ENCODE measurements at regions of chr6 and their contacts with region 1.

Region 1: DNA sequence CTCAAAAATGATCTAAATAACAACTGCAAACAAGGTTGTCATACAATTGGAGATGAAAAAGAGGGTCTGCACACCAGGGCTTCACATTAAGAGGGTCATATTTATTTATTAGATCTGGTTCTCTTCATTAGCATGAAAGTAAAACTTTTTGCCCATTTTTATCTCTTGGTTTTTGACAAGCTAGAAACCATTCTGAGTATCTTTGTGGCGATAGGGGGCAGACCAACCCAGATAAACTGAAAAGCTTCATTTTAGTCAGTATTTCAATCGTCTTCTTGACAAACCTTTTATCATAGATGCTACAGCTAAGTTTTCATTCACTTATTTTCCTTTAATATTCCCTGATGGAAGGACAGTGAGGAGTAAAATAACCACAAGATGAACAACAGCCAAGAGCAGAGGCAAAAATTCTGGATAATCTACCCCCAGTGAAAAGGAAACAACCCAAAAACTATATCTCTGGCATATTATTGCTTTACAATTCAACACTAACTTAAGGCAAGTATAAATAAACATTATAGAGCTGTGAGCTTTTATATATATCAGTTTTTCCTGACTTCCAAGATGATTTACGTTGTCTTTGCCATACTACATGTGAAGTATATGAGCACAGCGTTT is 45.2 kb downstream of the THEMIS start:
- DNase-seq: peak; percentile 49 to 59 (median 52)
- H3K4me3 ChIP-seq: no peak overlapping the region
- H3K4me3 Mint-ChIP-seq: peak overlapping the region in 6 of 8 donors; percentile 1 to 74 (median 48)
- H3K27ac ChIP-seq: peak overlapping the region; percentile 29
- H3K27ac Mint-ChIP-seq: peak overlapping the region; percentile 42 to 92 (median 66)
- H3K4me1 ChIP-seq: peaks cover 77% of the 10 kb centered on the region
- H3K4me1 Mint-ChIP-seq: peaks cover 57 to 83% (median 72%) of the 10 kb centered on the region in 4 donors
- H3K27me3 ChIP-seq: no peaks in the 10 kb centered on the region
- H3K27me3 Mint-ChIP-seq: no peaks in the 10 kb centered on the region

Region 2: DNA sequence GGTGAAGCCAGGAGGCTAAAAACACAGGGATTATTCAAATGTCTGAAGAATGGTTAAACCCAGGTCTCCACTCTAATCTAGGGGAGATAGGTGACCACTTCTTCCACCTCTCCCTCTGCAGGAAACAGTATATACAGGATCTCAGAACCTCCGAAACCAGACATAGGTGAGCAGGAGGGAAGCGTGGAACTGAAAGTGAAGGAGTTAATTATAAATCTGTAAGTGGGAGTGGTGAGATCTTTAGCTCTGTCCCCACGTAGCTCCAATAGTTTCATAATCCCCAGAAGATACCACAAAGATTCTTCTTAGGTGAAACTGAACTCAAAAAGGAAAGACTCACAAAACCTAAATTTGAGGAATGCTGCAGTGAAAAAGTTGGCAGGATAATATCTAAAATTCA is 31.6 kb before region 1 on chr6:
- CTCF ChIA-PET with region 1: no interaction called
- POLR2A ChIA-PET with region 1: no interaction called
- intact Hi-C with region 1: no loop called
- DNase-seq: no peak
- H3K4me3 ChIP-seq: no peak overlapping the region
- H3K4me3 Mint-ChIP-seq: peak overlapping the region in 5 of 8 donors; percentile 36 to 55 (median 47)
- H3K27ac ChIP-seq: no peak overlapping the region
- H3K27ac Mint-ChIP-seq: peak overlapping the region in 4 of 7 donors; percentile 6 to 84 (median 18)
- H3K4me1 ChIP-seq: peaks cover 42% of the 10 kb centered on the region
- H3K4me1 Mint-ChIP-seq: peaks cover 48 to 80% (median 67%) of the 10 kb centered on the region in 4 donors
- H3K27me3 ChIP-seq: no peaks in the 10 kb centered on the region
- H3K27me3 Mint-ChIP-seq: no peaks in the 10 kb centered on the region

Region 3: DNA sequence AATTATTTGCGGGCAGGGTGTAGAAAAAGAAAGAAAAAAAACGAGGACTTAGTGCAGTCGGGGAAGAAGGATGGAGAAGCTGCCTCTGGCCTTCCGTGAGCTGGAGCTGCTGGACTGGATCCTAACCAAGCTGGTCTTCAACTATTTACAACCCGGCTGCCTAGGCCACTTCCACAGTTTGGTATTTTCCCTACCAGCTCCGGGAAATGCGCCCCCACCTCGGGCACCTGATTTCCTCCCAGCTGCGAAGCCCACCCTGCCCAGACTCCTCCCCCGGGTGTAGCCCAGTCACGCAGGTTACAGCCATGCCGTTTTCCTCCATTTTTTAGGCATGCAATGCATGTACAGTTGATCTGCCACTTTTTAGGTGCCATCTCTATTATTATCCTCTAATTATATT is 24.0 kb after region 1 on chr6:
- CTCF ChIA-PET with region 1: interaction called, 4 read pairs
- POLR2A ChIA-PET with region 1: interaction called, 3 read pairs
- intact Hi-C with region 1: loop called (anchors 2 kb)
- DNase-seq: no peak
- H3K4me3 ChIP-seq: no peak overlapping the region
- H3K4me3 Mint-ChIP-seq: peak overlapping the region in 7 of 8 donors; percentile 43 to 87 (median 61)
- H3K27ac ChIP-seq: no peak overlapping the region
- H3K27ac Mint-ChIP-seq: peak overlapping the region; percentile 36 to 87 (median 81)
- H3K4me1 ChIP-seq: peaks cover 89% of the 10 kb centered on the region
- H3K4me1 Mint-ChIP-seq: peaks cover 52 to 77% (median 66%) of the 10 kb centered on the region in 4 donors
- H3K27me3 ChIP-seq: no peaks in the 10 kb centered on the region
- H3K27me3 Mint-ChIP-seq: no peaks in the 10 kb centered on the region

Region 4: GRCh38 chr6:127918506-127919427 is 63.1 kb after region 1 on chr6:
- CTCF ChIA-PET with region 1: interaction called, 15 read pairs
- POLR2A ChIA-PET with region 1: interaction called, 8 read pairs
- intact Hi-C with region 1: loop called (anchors 2 kb)
- DNase-seq: peak; percentile 72 to 79 (median 75)
- H3K4me3 ChIP-seq: peak overlapping the region; percentile 59 to 68
- H3K4me3 Mint-ChIP-seq: peak overlapping the region; percentile 93 to 99 (median 96)
- H3K27ac ChIP-seq: peak overlapping the region; percentile 53
- H3K27ac Mint-ChIP-seq: peak overlapping the region; percentile 86 to 98 (median 94)
- H3K4me1 ChIP-seq: peaks cover 79% of the 10 kb centered on the region
- H3K4me1 Mint-ChIP-seq: peaks cover 53 to 89% (median 71%) of the 10 kb centered on the region in 4 donors
- H3K27me3 ChIP-seq: no peaks in the 10 kb centered on the region
- H3K27me3 Mint-ChIP-seq: no peaks in the 10 kb centered on the region

Region 5: DNA sequence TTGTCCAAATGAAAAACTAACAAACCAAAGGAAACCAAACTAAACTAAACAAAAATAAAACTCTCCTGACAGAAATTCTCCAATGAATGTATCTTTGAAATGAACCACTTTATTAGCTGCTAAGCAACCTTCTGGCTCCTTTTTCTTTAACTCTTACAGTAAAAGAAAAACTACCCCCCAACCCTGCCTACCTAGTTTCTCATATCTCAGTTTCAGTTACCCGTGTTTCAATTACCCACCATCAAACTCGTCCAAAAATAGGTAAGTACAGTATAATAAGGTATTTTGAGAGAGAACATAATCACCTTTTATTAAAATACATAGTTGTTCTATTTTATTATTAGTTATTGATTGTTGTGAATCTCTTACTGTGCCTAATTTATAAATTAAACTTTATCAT is 222.6 kb after region 1 on chr6:
- CTCF ChIA-PET with region 1: interaction called, 4 read pairs
- POLR2A ChIA-PET with region 1: no interaction called
- intact Hi-C with region 1: loop called (anchors 5 kb)
- DNase-seq: no peak
- H3K4me3 ChIP-seq: no peak overlapping the region
- H3K4me3 Mint-ChIP-seq: no peak overlapping the region
- H3K27ac ChIP-seq: no peak overlapping the region
- H3K27ac Mint-ChIP-seq: no peak overlapping the region
- H3K4me1 ChIP-seq: no peaks in the 10 kb centered on the region
- H3K4me1 Mint-ChIP-seq: peaks cover 0 to 4% (median 0%) of the 10 kb centered on the region in 4 donors
- H3K27me3 ChIP-seq: no peaks in the 10 kb centered on the region
- H3K27me3 Mint-ChIP-seq: peaks cover 0 to 4% of the 10 kb centered on the region in 2 donors

Region 6: GRCh38 chr6:128327890-128328289 is 472.2 kb after region 1 on chr6:
- CTCF ChIA-PET with region 1: interaction called, 92 read pairs
- POLR2A ChIA-PET with region 1: interaction called, 16 read pairs
- intact Hi-C with region 1: loop called (anchors 1 kb)
- DNase-seq: peak; percentile 32 to 57 (median 50)
- H3K4me3 ChIP-seq: no peak overlapping the region
- H3K4me3 Mint-ChIP-seq: no peak overlapping the region
- H3K27ac ChIP-seq: no peak overlapping the region
- H3K27ac Mint-ChIP-seq: no peak overlapping the region
- H3K4me1 ChIP-seq: no peaks in the 10 kb centered on the region
- H3K4me1 Mint-ChIP-seq: peaks cover 0 to 2% (median 0%) of the 10 kb centered on the region in 4 donors
- H3K27me3 ChIP-seq: no peaks in the 10 kb centered on the region
- H3K27me3 Mint-ChIP-seq: no peaks in the 10 kb centered on the region